Thyroid gland (tissue), 4 donors: ENCODE measurements at regions of chr4 and their contacts with region 1.

Region 1: GRCh38 chr4:76504613-76505465 is 69.8 kb downstream of the SHROOM3 start:
- DNase-seq: no peak
- H3K4me3 ChIP-seq: no peak overlapping the region
- H3K27ac ChIP-seq: no peak overlapping the region
- H3K4me1 ChIP-seq: no peaks in the 10 kb centered on the region
- H3K27me3 ChIP-seq: no peaks in the 10 kb centered on the region
- CTCF ChIP-seq: peak; percentile 40 to 84 (median 62)
- POLR2A ChIP-seq: no peak

Region 2: DNA sequence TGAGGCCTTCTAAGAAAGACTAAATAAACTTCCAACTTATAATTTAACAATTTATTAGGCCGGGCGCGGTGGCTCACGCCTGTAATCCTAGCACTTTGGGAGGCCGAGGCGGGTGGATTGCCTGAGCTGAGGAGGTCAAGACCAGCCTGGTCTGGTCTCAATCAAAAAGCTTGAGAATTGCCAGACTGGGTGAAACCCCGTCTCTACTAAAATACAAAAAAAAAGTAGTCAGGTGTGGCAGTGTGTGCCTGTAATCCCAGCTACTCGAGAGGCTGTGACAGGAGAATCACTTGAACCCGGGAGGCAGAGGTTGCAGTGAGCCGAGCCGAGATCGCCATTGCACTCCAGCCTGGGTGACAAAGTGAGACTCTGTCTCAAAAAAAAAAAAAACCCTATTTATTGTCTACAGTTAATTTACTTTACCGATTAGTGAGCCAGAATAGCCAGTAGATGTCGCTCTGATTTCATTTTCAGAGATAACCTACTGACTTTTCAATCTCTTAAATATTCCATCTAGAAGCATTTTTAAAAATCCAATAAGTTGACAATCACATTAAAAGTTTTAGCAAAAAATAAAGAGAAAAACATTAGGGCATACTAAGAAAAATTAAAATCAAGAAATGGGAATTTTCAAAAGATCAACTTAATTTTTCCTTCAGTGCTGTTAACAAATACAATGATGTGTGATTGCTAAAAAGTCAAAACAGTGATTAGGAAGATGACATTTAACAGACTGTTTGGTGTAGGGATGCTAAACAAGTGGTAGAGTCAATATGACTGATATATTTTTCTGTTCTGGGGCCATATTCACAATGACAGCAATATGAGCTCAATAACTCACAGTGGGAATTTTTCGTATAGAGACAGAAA is 74.1 kb before region 1 on chr4:
- intact Hi-C with region 1: loop called (anchors 5 kb)
- DNase-seq: peak in 1 of 2 donors; percentile 19
- H3K4me3 ChIP-seq: no peak overlapping the region
- H3K27ac ChIP-seq: no peak overlapping the region
- H3K4me1 ChIP-seq: no peaks in the 10 kb centered on the region
- H3K27me3 ChIP-seq: no peaks in the 10 kb centered on the region
- CTCF ChIP-seq: peak; percentile 39 to 95 (median 61)
- POLR2A ChIP-seq: no peak

Region 3: DNA sequence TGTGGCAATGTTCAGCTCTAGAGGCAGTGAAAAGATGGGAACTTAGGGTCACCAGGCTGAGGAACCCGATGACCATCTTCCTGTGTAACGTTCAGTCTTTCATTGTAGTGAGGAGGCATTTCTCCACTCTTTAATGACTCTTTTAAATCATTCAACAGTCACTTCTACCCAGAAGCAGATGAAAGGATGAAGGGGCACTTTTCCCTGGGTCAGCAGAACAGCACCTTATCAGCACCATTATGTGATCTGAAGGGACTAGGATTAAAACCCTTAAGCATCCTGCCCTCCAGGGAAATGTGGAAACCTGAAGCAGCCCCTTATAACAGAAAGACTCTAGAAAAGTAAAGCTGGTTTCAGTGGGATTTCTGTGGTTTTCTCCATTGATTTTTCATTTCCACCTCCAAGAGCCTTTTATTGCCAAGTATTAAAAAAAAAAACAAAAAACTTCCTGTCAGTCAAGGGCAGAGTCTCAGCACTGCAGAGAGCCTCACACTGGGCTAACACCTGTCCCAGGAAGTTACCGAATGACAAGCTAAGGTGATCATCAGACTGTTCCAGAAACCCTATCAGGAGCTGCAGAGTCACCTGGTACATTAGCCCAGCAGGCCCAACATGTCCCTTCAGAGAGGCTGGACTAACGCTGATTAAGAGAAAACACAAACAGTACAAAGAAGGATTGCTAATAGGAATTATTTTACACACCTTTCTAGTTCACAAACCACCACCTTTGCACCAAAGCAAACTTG is 116.1 kb after region 1 on chr4:
- intact Hi-C with region 1: no loop called
- DNase-seq: no peak
- H3K4me3 ChIP-seq: no peak overlapping the region
- H3K27ac ChIP-seq: peak overlapping the region in 2 of 3 donors; percentile 10 to 87
- H3K4me1 ChIP-seq: peaks cover 41 to 43% of the 10 kb centered on the region in 2 donors
- H3K27me3 ChIP-seq: no peaks in the 10 kb centered on the region
- CTCF ChIP-seq: no peak
- POLR2A ChIP-seq: no peak